ENCODE measurements at regions of chr1 and their contacts with region 1.

Region 1: GRCh38 chr1:87292684-87293493 is 35.8 kb upstream of the LMO4 start:
- DNase-seq: peak; percentile 63 to 90
- H3K4me3 ChIP-seq: no peak overlapping the region
- H3K27ac ChIP-seq: no peak overlapping the region
- H3K4me1 ChIP-seq: no peaks in the 10 kb centered on the region
- H3K27me3 ChIP-seq: no peaks in the 10 kb centered on the region
- CTCF ChIP-seq: peak in 5 of 7 experiments; percentile 55 to 81 (median 61)
- EP300 ChIP-seq: no peak
- POLR2A ChIP-seq: no peak

Region 2: GRCh38 chr1:87108814-87109411 is 184.0 kb before region 1 on chr1:
- intact Hi-C with region 1: no loop called
- DNase-seq: no peak
- H3K4me3 ChIP-seq: no peak overlapping the region
- H3K27ac ChIP-seq: no peak overlapping the region
- H3K4me1 ChIP-seq: no peaks in the 10 kb centered on the region
- H3K27me3 ChIP-seq: no peaks in the 10 kb centered on the region
- CTCF ChIP-seq: no peak
- EP300 ChIP-seq: no peak
- POLR2A ChIP-seq: no peak

Region 3: GRCh38 chr1:87131809-87132283 is 161.0 kb before region 1 on chr1:
- intact Hi-C with region 1: loop called (anchors 10 kb)
- DNase-seq: peak; percentile 79 to 95
- H3K4me3 ChIP-seq: peak overlapping the region; percentile 45 to 56 (median 50)
- H3K27ac ChIP-seq: peak overlapping the region in 3 of 5 donors; percentile 37 to 67 (median 59)
- H3K4me1 ChIP-seq: peaks cover 0 to 15% (median 7%) of the 10 kb centered on the region in 4 donors
- H3K27me3 ChIP-seq: peaks cover 0 to 6% (median 0%) of the 10 kb centered on the region in 3 donors
- CTCF ChIP-seq: peak in 5 of 7 experiments; percentile 74 to 92 (median 83)
- EP300 ChIP-seq: no peak
- POLR2A ChIP-seq: no peak